Left cardiac atrium (tissue), 4 donors: ENCODE measurements at regions of chr12 and their contacts with region 1.

Region 1: GRCh38 chr12:32671930-32672780 is 6.9 kb upstream of the DNM1L start:
- DNase-seq: no peak
- ATAC-seq: peak; percentile 75 to 89

Region 2: DNA sequence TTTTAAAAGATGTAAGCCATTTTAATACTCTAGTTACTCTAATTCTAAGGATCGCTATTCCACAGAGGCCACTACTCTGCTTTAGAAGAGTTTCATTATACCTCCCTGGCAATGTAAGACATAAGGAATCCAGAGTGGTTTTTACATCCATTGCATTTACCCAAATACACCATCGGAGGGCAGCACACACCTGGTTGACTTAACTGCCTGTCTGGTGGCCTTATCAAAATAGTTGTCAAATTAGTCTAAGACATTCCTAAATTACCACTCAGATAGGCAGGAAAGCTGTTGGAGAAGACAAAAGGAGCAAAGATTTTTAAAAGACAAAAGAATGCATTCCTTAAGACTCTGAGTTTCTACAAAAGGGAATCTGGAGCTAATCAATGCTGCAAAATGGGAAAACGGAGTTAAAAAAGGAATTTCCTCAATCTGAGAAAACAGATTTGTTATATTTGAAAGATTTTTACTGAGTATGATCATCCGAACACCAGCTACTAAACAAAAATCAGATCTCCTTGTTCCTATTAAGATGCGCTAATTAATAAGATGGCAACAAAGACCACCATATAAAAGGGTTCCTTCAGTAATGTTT is 306.6 kb before region 1 on chr12:
- intact Hi-C with region 1: loop called (anchors 2 to 5 kb)
- DNase-seq: no peak
- ATAC-seq: peak; percentile 68 to 76

Region 3: DNA sequence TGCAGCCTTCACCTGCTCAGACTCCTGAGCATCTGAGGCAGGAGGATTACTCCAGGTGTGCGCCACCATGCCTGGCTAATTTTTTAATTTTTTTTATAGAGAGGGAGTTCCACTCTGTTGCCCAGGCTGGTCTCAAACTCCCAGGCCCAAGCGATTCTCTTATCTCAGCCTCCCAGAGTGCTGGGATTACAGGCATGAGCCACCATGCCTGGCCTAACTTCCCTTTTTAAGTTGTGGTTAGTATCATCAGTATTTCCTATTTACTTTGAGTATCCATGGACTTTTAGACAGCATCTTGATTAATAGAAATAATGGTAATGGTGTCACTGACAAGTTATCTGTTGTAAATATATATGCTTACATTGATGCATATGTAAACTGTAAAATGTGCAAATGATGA is 155.9 kb before region 1 on chr12:
- intact Hi-C with region 1: no loop called
- DNase-seq: no peak
- ATAC-seq: no peak